Spleen (tissue), 13 donors: ENCODE measurements at regions of chr15 and their contacts with region 1.

Region 1: DNA sequence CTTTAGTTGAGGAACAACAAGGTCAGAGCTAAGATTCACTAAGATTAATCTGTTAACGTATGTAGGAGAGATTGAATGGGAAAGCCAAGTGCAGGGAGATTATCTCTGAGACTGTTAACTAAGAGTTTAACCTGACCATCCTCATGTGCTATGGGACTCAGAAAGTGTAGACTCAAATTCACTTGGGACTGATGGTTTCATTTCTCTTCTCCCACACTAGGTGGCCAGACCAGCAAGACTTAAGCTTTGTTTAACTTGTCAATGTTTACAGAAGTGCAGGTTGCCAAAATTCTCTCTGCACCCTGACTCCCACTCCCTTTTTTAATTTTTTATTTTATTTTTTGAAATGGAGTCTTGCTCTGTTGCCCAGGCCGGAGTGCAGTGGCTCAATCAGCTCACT is 6.3 kb upstream of the HEXA start:
- DNase-seq: no peak
- H3K4me3 ChIP-seq: no peak overlapping the region
- H3K27ac ChIP-seq: no peak overlapping the region
- H3K4me1 ChIP-seq: peaks cover 0 to 6% (median 2%) of the 10 kb centered on the region in 6 donors
- H3K27me3 ChIP-seq: peaks cover 0 to 19% (median 0%) of the 10 kb centered on the region in 7 donors
- CTCF ChIP-seq: no peak
- POLR2A ChIP-seq: no peak

Region 2: GRCh38 chr15:71728881-71729280 is 653.3 kb before region 1 on chr15:
- intact Hi-C with region 1: no loop called
- DNase-seq: no peak
- H3K4me3 ChIP-seq: no peak overlapping the region
- H3K27ac ChIP-seq: no peak overlapping the region
- H3K4me1 ChIP-seq: peaks cover 0 to 7% (median 0%) of the 10 kb centered on the region in 6 donors
- H3K27me3 ChIP-seq: peaks cover 0 to 7% (median 0%) of the 10 kb centered on the region in 7 donors
- CTCF ChIP-seq: no peak
- POLR2A ChIP-seq: no peak

Region 3: DNA sequence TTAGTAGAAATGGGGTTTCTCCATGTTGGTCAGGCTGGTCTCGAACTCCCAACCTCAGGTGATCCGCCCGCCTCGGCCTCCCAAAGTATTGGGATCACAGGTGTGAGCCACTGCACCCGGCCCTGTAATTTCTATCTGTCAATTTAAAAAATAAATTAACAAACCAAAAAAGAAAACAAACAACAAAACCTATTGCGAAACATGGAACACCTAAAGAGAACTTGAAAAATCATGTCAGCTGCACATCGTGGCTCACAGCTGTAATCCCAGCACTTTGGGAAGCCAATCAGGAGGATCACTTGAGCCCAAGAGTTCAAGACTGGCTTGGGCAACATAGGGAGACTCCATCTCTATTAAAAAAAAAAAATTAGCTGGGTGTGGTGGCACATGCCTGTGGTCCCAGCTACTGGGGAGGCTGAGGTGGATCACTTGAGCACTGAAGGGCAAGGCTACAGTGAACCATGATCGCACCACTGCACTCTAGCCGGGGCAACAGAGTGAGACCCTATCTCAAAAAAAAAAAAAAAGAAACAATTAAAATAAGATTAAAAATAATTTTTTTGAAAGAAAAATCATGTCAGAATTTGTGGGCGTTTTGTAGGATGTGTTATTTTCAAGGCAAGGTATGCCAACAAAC is 129.4 kb before region 1 on chr15:
- intact Hi-C with region 1: no loop called
- DNase-seq: no peak
- H3K4me3 ChIP-seq: no peak overlapping the region
- H3K27ac ChIP-seq: no peak overlapping the region
- H3K4me1 ChIP-seq: no peaks in the 10 kb centered on the region
- H3K27me3 ChIP-seq: no peaks in the 10 kb centered on the region
- CTCF ChIP-seq: no peak
- POLR2A ChIP-seq: no peak

Region 4: GRCh38 chr15:72265031-72265430 is 117.1 kb before region 1 on chr15:
- intact Hi-C with region 1: no loop called
- DNase-seq: no peak
- H3K4me3 ChIP-seq: no peak overlapping the region
- H3K27ac ChIP-seq: no peak overlapping the region
- H3K4me1 ChIP-seq: peaks cover 0 to 8% (median 5%) of the 10 kb centered on the region in 6 donors
- H3K27me3 ChIP-seq: no peaks in the 10 kb centered on the region
- CTCF ChIP-seq: no peak
- POLR2A ChIP-seq: no peak

Region 5: DNA sequence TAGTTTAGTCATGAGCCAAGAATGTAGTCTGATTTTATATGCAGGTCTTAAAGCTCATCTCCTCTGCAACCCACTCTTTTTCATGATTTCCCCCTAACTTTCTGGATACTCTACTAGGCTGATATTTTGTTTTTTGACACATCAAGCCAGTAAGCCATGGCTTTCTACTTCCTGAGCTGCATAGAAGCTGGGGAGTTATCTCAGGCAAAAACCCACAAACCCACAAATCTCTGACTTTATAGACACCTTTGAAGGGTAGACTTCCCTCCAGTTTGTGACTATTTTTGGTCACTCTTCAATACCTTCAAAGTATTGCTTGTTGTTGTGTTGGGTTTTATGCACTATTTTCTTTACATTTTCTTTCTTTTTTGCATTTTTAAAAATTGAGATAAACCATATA is 44.6 kb after region 1 on chr15:
- intact Hi-C with region 1: no loop called
- DNase-seq: no peak
- H3K4me3 ChIP-seq: no peak overlapping the region
- H3K27ac ChIP-seq: no peak overlapping the region
- H3K4me1 ChIP-seq: no peaks in the 10 kb centered on the region
- H3K27me3 ChIP-seq: no peaks in the 10 kb centered on the region
- CTCF ChIP-seq: no peak
- POLR2A ChIP-seq: no peak

Region 6: GRCh38 chr15:72451224-72451623 is 69.1 kb after region 1 on chr15:
- intact Hi-C with region 1: loop called (anchors 10 kb)
- DNase-seq: no peak
- H3K4me3 ChIP-seq: no peak overlapping the region
- H3K27ac ChIP-seq: no peak overlapping the region
- H3K4me1 ChIP-seq: no peaks in the 10 kb centered on the region
- H3K27me3 ChIP-seq: no peaks in the 10 kb centered on the region
- CTCF ChIP-seq: no peak
- POLR2A ChIP-seq: no peak